ENCODE measurements at regions of chr14 and their contacts with region 1.

Region 1: DNA sequence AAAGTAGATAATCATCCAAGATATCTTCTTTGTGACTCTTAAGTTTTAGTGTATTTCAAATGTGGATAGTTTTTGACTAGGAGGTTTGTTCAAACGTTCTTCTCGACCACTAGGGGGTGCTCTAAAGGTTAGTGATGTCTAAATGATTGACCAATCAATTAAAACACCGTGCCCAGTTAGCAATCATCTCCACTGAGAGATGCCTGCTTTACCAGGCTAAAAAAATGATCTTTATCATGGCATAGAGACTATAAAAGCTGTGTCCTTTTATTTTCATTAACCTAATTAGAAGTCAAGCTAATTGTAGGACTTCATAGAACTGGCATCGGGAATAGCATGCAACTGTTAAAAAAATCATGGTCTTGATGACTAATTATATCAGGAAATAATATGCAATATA is 153.9 kb downstream of the PRKCH start:
- DNase-seq: peak; percentile 62
- H3K4me3 ChIP-seq: no peak overlapping the region
- H3K27ac ChIP-seq: no peak overlapping the region
- H3K4me1 ChIP-seq: peaks cover 59% of the 10 kb centered on the region
- H3K27me3 ChIP-seq: no peaks in the 10 kb centered on the region
- CTCF ChIP-seq: peak; percentile 64 to 66

Region 2: GRCh38 chr14:61512026-61512834 is 36.9 kb after region 1 on chr14:
- CTCF ChIA-PET with region 1: no interaction called
- dilution Hi-C with region 1: no loop called
- in situ Hi-C with region 1: no loop called
- intact Hi-C with region 1: loop called (anchors 5 kb)
- DNase-seq: peak; percentile 79
- H3K4me3 ChIP-seq: no peak overlapping the region
- H3K27ac ChIP-seq: peak overlapping the region; percentile 70
- H3K4me1 ChIP-seq: peaks cover 55% of the 10 kb centered on the region
- H3K27me3 ChIP-seq: no peaks in the 10 kb centered on the region
- CTCF ChIP-seq: no peak

Region 3: GRCh38 chr14:61525293-61526011 is 50.1 kb after region 1 on chr14:
- CTCF ChIA-PET with region 1: no interaction called
- dilution Hi-C with region 1: no loop called
- in situ Hi-C with region 1: no loop called
- intact Hi-C with region 1: loop called (anchors 2 kb)
- DNase-seq: peak; percentile 100
- H3K4me3 ChIP-seq: no peak overlapping the region
- H3K27ac ChIP-seq: peak overlapping the region; percentile 89
- H3K4me1 ChIP-seq: peaks cover 62% of the 10 kb centered on the region
- H3K27me3 ChIP-seq: no peaks in the 10 kb centered on the region
- CTCF ChIP-seq: no peak

Region 4: GRCh38 chr14:61537563-61538463 is 62.5 kb after region 1 on chr14:
- CTCF ChIA-PET with region 1: no interaction called
- dilution Hi-C with region 1: loop called (anchors 5 kb)
- in situ Hi-C with region 1: no loop called
- intact Hi-C with region 1: loop called (anchors 1 kb)
- DNase-seq: peak; percentile 100
- H3K4me3 ChIP-seq: no peak overlapping the region
- H3K27ac ChIP-seq: peak overlapping the region; percentile 80
- H3K4me1 ChIP-seq: peaks cover 50% of the 10 kb centered on the region
- H3K27me3 ChIP-seq: no peaks in the 10 kb centered on the region
- CTCF ChIP-seq: no peak

Region 5: GRCh38 chr14:61561657-61562276 is 86.5 kb after region 1 on chr14:
- CTCF ChIA-PET with region 1: interaction called, 4 read pairs
- dilution Hi-C with region 1: no loop called
- in situ Hi-C with region 1: no loop called
- intact Hi-C with region 1: loop called (anchors 2 kb)
- DNase-seq: peak; percentile 91
- H3K4me3 ChIP-seq: no peak overlapping the region
- H3K27ac ChIP-seq: peak overlapping the region; percentile 96
- H3K4me1 ChIP-seq: peaks cover 70% of the 10 kb centered on the region
- H3K27me3 ChIP-seq: no peaks in the 10 kb centered on the region
- CTCF ChIP-seq: no peak

Region 6: DNA sequence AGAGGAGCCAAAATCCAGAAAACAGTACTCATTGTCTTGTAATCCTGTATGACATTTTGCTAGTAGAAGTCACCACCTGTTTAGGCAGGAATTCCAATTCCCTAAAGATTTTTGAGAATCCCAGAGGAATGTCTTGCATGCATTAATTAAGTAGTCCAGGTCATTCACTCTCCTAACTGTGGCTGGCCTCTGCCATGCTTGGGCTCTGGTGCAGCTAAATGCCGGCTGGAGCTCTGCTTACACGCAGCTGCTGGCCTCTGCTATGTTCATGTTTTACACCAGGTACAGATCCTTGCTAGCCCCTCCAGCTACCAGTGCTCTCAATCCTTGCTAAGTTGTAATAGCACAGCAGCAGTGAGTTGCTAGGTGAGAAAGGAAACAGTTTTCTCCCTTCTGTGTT is 203.7 kb after region 1 on chr14:
- CTCF ChIA-PET with region 1: no interaction called
- dilution Hi-C with region 1: no loop called
- in situ Hi-C with region 1: no loop called
- intact Hi-C with region 1: no loop called
- DNase-seq: no peak
- H3K4me3 ChIP-seq: no peak overlapping the region
- H3K27ac ChIP-seq: no peak overlapping the region
- H3K4me1 ChIP-seq: peaks cover 7% of the 10 kb centered on the region
- H3K27me3 ChIP-seq: no peaks in the 10 kb centered on the region
- CTCF ChIP-seq: no peak

Region 7: GRCh38 chr14:61730756-61731373 is 255.5 kb after region 1 on chr14:
- CTCF ChIA-PET with region 1: interaction called, 3 read pairs
- dilution Hi-C with region 1: no loop called
- in situ Hi-C with region 1: no loop called
- intact Hi-C with region 1: loop called (anchors 1 kb)
- DNase-seq: no peak
- H3K4me3 ChIP-seq: no peak overlapping the region
- H3K27ac ChIP-seq: no peak overlapping the region
- H3K4me1 ChIP-seq: peaks cover 14% of the 10 kb centered on the region
- H3K27me3 ChIP-seq: no peaks in the 10 kb centered on the region
- CTCF ChIP-seq: peak; percentile 14 to 40

Measured in mammary epithelial cell (primary cell).